RWPE1 (cell line): ENCODE measurements at regions of chr14 and their contacts with region 1.

Region 1: GRCh38 chr14:66959437-66960050 is 229.7 kb upstream of the GARIN2 start:
- DNase-seq: no peak
- H3K27ac ChIP-seq: no peak overlapping the region
- CTCF ChIP-seq: no peak

Region 2: DNA sequence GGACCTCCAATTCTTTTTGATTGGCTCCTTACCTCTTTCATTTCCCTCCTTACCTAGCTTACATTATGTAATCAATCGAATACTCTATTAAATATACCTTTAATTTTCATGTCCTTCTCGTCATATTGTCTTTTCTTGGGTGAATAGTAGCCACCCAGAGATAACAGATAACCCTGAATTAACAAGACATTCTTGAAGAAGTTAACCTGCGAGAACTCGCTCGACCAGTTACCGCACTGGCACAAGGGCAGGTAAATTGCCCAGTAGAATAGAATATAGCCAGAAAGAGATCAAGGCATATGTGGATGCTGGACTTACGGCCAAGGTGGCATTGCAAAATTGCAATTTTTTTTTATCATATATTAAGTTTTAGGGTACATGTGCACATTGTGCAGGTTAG is 188.3 kb before region 1 on chr14:
- CTCF ChIA-PET with region 1: interaction called, 10 read pairs
- POLR2A ChIA-PET with region 1: no interaction called
- DNase-seq: no peak
- H3K27ac ChIP-seq: no peak overlapping the region
- CTCF ChIP-seq: no peak